ENCODE measurements at regions of chr17 and their contacts with region 1.

Region 1: DNA sequence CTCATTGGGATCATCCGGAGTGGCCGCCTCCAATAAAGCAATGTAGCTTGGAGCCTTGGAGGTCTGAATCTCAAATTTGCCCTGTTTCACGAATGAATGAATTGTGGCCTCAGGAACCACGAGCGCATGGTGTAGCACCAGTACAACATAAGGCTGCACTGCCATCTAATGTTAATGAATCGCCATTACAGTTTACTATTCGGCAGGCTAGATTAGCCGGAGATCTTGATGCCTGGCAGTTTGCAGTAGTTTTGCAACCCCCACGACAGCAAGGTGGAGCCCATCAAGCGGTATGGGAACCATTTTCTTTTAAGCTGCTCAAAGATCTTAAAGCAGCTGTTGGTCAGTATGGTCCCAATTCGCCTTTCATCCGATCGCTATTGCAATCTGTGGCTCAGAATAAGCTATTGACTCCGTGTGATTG is 18.8 kb downstream of the ALOX15B start:
- DNase-seq: peak; percentile 45
- ATAC-seq: peak; percentile 78
- H3K4me3 ChIP-seq: no peak overlapping the region
- H3K27ac ChIP-seq: no peak overlapping the region
- H3K4me1 ChIP-seq: peaks cover 14% of the 10 kb centered on the region
- H3K27me3 ChIP-seq: peaks cover 0 to 4% of the 10 kb centered on the region in 2 experiments; a peak in 1 of 4 replicates
- CTCF ChIP-seq: peak; percentile 69 to 81 (median 74)
- EP300 ChIP-seq: no peak
- POLR2A ChIP-seq: no peak
- RAD21 ChIP-seq: peak; percentile 80

Region 2: DNA sequence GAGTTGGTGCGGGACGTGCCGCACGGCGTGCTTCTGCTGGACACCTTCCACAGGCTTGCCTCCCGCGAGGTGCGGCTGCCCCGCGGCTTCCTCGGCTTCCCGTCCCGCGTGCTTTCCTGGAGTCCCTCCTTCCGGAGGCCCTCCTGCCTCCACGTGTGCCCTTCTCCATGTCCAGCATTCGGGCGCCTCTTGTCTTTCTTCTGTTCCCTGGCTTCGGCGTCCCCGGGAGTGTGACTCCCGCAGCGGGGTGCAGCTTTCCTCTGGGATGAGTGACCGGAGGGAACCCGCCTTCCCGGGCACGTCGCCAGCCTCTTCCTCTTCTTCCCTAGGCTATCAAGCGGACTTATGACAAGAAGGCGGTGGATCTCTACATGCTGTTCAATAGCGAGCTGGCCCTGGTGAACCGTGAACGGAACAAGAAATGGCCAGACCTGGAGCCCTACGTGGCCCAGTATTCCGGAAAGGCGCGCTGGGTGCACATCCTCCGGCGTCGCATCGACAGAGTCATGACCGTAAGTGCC is 317.2 kb before region 1 on chr17:
- CTCF ChIA-PET with region 1: interaction called, 30 read pairs
- POLR2A ChIA-PET with region 1: no interaction called
- RAD21 ChIA-PET with region 1: interaction called, 13 read pairs
- SMC1A ChIA-PET with region 1: interaction called, 7 read pairs
- in situ Hi-C with region 1: no loop called
- intact Hi-C with region 1: loop called (anchors 5 kb)
- DNase-seq: no peak
- ATAC-seq: no peak
- H3K4me3 ChIP-seq: no peak overlapping the region
- H3K27ac ChIP-seq: no peak overlapping the region
- H3K4me1 ChIP-seq: no peaks in the 10 kb centered on the region
- H3K27me3 ChIP-seq: no peaks in the 10 kb centered on the region; a peak in 2 of 4 replicates
- CTCF ChIP-seq: no peak
- EP300 ChIP-seq: no peak
- POLR2A ChIP-seq: no peak
- RAD21 ChIP-seq: no peak

Region 3: DNA sequence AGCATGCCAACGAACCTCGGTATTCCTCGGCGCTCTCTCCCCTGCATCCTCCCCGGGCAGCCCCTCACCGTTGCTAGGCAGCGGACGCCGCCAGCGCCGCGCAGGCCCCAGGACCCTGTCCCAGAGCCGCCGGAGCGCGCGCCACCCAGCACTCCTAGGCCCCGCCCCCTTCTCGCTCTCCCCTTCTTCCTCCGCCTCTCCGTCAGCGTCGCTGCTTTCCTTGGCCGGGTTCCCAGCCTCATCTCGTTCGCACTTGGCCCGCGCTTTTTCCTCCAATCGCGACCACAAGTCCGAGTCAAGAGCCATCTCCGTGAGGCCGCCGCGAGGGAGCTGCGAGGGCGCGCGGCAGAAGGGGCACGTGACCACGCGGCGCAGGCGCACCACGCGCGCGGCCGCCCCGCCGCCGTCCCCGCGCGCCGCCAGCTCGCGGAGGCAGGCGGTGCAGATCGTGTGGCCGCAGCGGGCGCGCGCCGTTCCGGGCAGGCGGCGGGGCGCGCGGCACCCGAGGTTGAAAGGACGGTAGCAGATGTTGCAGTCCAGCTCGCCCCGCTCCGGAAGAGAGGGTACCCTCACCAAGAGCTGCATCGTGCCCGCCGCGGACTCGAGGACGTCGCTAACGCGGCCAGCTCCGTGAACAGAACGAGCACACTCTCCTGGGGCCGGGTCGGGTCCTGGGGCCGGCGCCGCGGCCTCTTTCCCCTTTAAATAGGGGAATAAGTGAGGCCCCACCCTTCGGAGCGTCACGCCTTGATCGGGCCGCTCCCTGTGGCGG is 141.9 kb before region 1 on chr17 and contains the start of gene RNF227:
- CTCF ChIA-PET with region 1: interaction called, 35 read pairs
- POLR2A ChIA-PET with region 1: no interaction called
- RAD21 ChIA-PET with region 1: interaction called, 7 read pairs
- SMC1A ChIA-PET with region 1: interaction called, 6 read pairs
- in situ Hi-C with region 1: no loop called
- intact Hi-C with region 1: loop called (anchors 1 kb)
- DNase-seq: peak; percentile 57
- ATAC-seq: peak; percentile 87
- H3K4me3 ChIP-seq: peak within 1 kb of the TSS; percentile 76
- H3K27ac ChIP-seq: peak within 1 kb of the TSS; percentile 34
- H3K4me1 ChIP-seq: peaks cover 10% of the 10 kb centered on the region
- H3K27me3 ChIP-seq: no peaks in the 10 kb centered on the region
- CTCF ChIP-seq: 0 out of 6 replicates have a peak, but pooled peaks of 1 of the 3 experiments have one; percentile 6
- EP300 ChIP-seq: no peak
- POLR2A ChIP-seq: peak; percentile 71
- RAD21 ChIP-seq: no peak
- polyA plus RNA-seq, gene RNF227: 0.49 to 0.87 TPM

Region 4: DNA sequence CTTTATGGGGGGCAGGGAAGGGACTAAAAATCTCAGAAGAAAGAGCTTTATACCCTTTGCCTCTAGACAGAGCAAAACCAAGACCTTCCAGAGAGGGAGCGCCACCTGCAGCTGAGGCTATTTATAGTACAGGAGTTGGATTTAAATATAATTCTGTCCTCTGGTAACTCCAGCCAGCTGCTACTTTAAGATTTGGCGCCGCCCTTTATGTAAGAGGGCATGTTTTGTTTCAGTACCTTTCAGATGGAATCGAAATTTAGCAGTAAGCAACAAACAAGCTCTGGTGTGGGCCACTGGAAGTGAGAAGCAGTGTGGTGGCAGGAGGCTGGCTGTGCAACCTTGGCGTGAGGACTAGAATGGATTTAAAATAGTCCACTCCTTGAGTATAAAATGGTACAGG is 60.5 kb before region 1 on chr17:
- CTCF ChIA-PET with region 1: interaction called, 15 read pairs
- POLR2A ChIA-PET with region 1: interaction called, 3 read pairs
- RAD21 ChIA-PET with region 1: no interaction called
- SMC1A ChIA-PET with region 1: interaction called, 8 read pairs
- in situ Hi-C with region 1: no loop called
- intact Hi-C with region 1: no loop called
- DNase-seq: no peak
- ATAC-seq: peak; percentile 73
- H3K4me3 ChIP-seq: no peak overlapping the region
- H3K27ac ChIP-seq: no peak overlapping the region
- H3K4me1 ChIP-seq: peaks cover 9% of the 10 kb centered on the region
- H3K27me3 ChIP-seq: peaks cover under 1 to 2% of the 10 kb centered on the region in 2 experiments; a peak in 3 of 4 replicates
- CTCF ChIP-seq: peak in 2 of 3 experiments; percentile 21 to 41; a peak in 3 of 6 replicates
- EP300 ChIP-seq: no peak
- POLR2A ChIP-seq: no peak
- RAD21 ChIP-seq: no peak

Region 5: GRCh38 chr17:8073627-8074484 is 16.2 kb after region 1 on chr17:
- CTCF ChIA-PET with region 1: interaction called, 159 read pairs
- POLR2A ChIA-PET with region 1: no interaction called
- RAD21 ChIA-PET with region 1: interaction called, 25 read pairs
- SMC1A ChIA-PET with region 1: interaction called, 37 read pairs
- in situ Hi-C with region 1: no loop called
- intact Hi-C with region 1: no loop called
- DNase-seq: no peak
- ATAC-seq: peak; percentile 97
- H3K4me3 ChIP-seq: no peak overlapping the region
- H3K27ac ChIP-seq: no peak overlapping the region
- H3K4me1 ChIP-seq: no peaks in the 10 kb centered on the region
- H3K27me3 ChIP-seq: peaks cover 8 to 20% of the 10 kb centered on the region in 2 experiments
- CTCF ChIP-seq: peak; percentile 86 to 95 (median 93)
- EP300 ChIP-seq: no peak
- POLR2A ChIP-seq: no peak
- RAD21 ChIP-seq: no peak

Region 6: DNA sequence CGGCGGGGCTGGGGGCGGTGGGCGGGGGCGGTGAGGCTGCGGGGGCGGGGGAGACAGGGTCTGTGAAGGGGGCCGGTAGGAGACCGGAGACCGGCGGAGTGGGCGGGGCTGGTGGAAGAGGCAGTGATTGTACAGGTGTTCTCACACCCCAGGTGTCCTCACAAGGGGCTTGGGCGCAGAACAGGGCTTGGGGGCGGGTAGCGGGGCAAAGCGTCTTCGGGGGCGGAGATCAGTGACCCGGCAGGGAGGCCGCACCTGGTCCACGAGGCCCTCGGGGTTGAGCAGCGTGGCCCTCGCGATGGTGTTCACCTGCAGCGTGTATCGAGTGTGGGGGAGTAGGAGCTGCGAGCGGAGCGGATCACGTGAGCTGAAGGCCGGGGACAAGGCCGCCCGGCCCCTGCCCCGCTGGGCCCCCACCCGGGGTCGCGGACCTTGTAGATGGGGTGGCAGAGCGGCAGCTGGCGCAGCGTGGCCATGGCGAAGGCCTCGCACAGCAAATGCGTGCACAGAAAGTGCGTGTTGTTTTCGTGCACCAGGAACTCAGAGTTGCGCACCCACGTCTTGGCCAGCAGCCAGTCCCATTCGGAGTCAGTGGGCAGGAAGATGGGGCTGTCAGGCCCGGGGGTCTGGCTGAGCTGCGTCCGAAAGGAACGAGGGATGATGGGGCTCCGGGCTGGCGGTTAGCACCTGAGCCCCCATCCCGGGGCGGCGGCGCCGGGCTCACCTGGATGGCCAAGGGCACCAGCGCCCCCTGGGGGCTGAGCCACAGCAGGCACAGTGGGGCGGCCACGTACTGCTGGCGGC is 52.2 kb after region 1 on chr17:
- CTCF ChIA-PET with region 1: interaction called, 106 read pairs
- POLR2A ChIA-PET with region 1: interaction called, 3 read pairs
- RAD21 ChIA-PET with region 1: interaction called, 10 read pairs
- SMC1A ChIA-PET with region 1: interaction called, 13 read pairs
- in situ Hi-C with region 1: no loop called
- intact Hi-C with region 1: loop called (anchors 5 kb)
- DNase-seq: no peak
- ATAC-seq: peak; percentile 99
- H3K4me3 ChIP-seq: peak overlapping the region; percentile 57; the same call in 1 of the 2 replicates
- H3K27ac ChIP-seq: no peak overlapping the region
- H3K4me1 ChIP-seq: peaks cover 4% of the 10 kb centered on the region
- H3K27me3 ChIP-seq: no peaks in the 10 kb centered on the region; a peak in 2 of 4 replicates
- CTCF ChIP-seq: peak; percentile 85 to 97 (median 94)
- EP300 ChIP-seq: no peak
- POLR2A ChIP-seq: no peak
- RAD21 ChIP-seq: peak; percentile 66